Activated CD4-positive, alpha-beta T cell treated with anti-CD3 and anti-CD28 coated beads for 36 hours (primary cell): ENCODE measurements at regions of chr1 and their contacts with region 1.

Region 1: GRCh38 chr1:36411674-36412520 is 14.2 kb upstream of the LSM10 start:
- DNase-seq: peak; percentile 82
- ATAC-seq: peak; percentile 98
- H3K4me3 Mint-ChIP-seq: peak overlapping the region; percentile 44
- H3K27ac Mint-ChIP-seq: peak overlapping the region; percentile 91
- H3K4me1 Mint-ChIP-seq: peaks cover 21% of the 10 kb centered on the region
- H3K27me3 Mint-ChIP-seq: no peaks in the 10 kb centered on the region

Region 2: DNA sequence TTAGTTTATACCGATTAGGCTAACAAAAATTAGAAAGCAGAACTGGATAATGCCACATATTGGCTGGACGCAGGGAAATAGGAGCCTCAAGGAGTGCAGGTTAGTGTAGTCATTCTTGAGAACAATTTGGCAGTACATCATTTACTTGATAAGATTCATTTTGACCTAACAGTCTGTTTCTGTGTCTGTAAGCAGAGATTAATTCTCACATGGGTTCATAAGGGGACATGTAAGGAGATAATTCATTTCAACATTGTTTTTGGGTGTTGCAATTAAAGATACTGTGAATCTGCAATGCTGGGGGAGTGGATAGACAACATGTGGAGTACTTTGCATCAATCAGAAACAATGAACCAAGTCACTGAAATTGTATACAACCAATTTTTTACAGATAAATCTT is 448.9 kb before region 1 on chr1:
- CTCF ChIA-PET with region 1: no interaction called
- POLR2A ChIA-PET with region 1: no interaction called
- intact Hi-C with region 1: no loop called
- DNase-seq: no peak
- ATAC-seq: no peak
- H3K4me3 Mint-ChIP-seq: no peak overlapping the region
- H3K27ac Mint-ChIP-seq: no peak overlapping the region
- H3K4me1 Mint-ChIP-seq: peaks cover 4% of the 10 kb centered on the region
- H3K27me3 Mint-ChIP-seq: no peaks in the 10 kb centered on the region

Region 3: GRCh38 chr1:36123356-36123755 is 288.5 kb before region 1 on chr1:
- CTCF ChIA-PET with region 1: no interaction called
- POLR2A ChIA-PET with region 1: no interaction called
- intact Hi-C with region 1: no loop called
- DNase-seq: peak; percentile 51
- ATAC-seq: peak; percentile 73
- H3K4me3 Mint-ChIP-seq: no peak overlapping the region
- H3K27ac Mint-ChIP-seq: no peak overlapping the region
- H3K4me1 Mint-ChIP-seq: peaks cover 20% of the 10 kb centered on the region
- H3K27me3 Mint-ChIP-seq: peaks cover 41% of the 10 kb centered on the region

Region 4: GRCh38 chr1:36397378-36398230 is 14.3 kb before region 1 on chr1 and contains the start of gene LSM10:
- CTCF ChIA-PET with region 1: interaction called, 3 read pairs
- POLR2A ChIA-PET with region 1: no interaction called
- intact Hi-C with region 1: loop called (anchors 1 to 2 kb)
- DNase-seq: peak; percentile 96
- ATAC-seq: peak; percentile 89
- H3K4me3 Mint-ChIP-seq: peak within 1 kb of the TSS; percentile 90
- H3K27ac Mint-ChIP-seq: peak within 1 kb of the TSS; percentile 99
- H3K4me1 Mint-ChIP-seq: peaks cover 25% of the 10 kb centered on the region
- H3K27me3 Mint-ChIP-seq: no peaks in the 10 kb centered on the region
- total RNA-seq, gene LSM10: 40.6 to 44.0 TPM

Region 5: DNA sequence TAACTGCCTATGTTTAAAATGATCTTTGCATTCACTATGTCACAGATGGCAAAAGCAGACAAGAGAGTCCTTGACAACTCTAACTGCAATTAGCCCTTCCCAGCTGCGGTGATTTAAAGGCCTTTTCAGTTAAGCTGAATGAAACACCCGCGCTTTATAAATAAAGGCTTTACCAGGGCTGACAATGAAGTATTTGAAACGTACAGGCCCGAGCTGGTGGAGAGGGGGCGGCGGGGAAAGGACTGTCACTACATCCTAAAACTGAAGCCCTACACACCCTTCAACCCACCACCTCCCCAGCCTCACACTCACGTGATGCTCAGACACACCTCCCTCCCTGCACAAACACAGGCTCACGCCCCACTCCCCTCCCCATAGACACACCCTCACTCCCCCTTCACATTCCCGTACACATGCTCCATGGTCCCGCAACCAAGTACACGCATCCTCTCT is 576.9 kb after region 1 on chr1:
- CTCF ChIA-PET with region 1: no interaction called
- POLR2A ChIA-PET with region 1: no interaction called
- intact Hi-C with region 1: no loop called
- DNase-seq: no peak
- ATAC-seq: no peak
- H3K4me3 Mint-ChIP-seq: no peak overlapping the region
- H3K27ac Mint-ChIP-seq: no peak overlapping the region
- H3K4me1 Mint-ChIP-seq: no peaks in the 10 kb centered on the region
- H3K27me3 Mint-ChIP-seq: peaks cover 12% of the 10 kb centered on the region